CD4-positive, alpha-beta memory T cell (primary cell): ENCODE measurements at regions of chr7 and their contacts with region 1.

Region 1: DNA sequence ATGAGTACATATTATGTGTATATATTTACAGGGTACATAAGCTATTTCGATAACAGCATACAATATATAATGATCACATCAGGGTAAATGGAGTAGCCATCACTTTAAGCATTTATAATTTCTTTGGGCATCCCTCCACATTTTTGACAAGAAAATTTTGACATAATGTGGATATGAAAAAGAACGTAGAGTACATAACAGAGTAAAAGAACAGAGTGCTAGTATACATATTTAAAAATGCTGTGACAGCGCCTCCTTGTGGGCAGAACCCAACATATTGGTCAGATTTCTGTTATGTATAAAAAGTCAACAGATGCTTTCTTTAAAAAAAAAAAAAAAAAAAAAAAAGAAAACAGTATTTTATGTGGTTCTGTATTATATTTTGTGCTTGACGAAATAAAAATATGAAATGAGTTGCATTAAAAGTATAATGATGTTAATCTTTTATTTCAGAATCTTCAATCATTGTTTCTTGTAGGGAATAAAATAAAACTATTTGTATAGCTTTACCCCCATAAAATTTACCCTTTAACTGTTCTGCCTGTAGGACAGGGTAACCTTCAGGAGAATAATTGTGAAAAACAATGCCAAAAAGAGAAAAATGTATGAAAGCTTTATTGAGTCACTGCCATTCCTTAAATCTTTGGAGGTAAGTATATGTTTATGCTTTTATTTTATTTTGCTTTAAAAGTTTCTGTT is 18.3 kb upstream of the HBP1 start:
- DNase-seq: peak; percentile 68 to 81 (median 74)
- H3K4me3 ChIP-seq: no peak overlapping the region
- H3K4me3 Mint-ChIP-seq: no peak overlapping the region
- H3K27ac ChIP-seq: no peak overlapping the region
- H3K27ac Mint-ChIP-seq: no peak overlapping the region
- H3K4me1 ChIP-seq: no peaks in the 10 kb centered on the region
- H3K4me1 Mint-ChIP-seq: peaks cover 0 to 2% (median 1%) of the 10 kb centered on the region in 4 donors
- H3K27me3 ChIP-seq: no peaks in the 10 kb centered on the region
- H3K27me3 Mint-ChIP-seq: peaks cover 0 to 2% of the 10 kb centered on the region in 2 donors

Region 2: DNA sequence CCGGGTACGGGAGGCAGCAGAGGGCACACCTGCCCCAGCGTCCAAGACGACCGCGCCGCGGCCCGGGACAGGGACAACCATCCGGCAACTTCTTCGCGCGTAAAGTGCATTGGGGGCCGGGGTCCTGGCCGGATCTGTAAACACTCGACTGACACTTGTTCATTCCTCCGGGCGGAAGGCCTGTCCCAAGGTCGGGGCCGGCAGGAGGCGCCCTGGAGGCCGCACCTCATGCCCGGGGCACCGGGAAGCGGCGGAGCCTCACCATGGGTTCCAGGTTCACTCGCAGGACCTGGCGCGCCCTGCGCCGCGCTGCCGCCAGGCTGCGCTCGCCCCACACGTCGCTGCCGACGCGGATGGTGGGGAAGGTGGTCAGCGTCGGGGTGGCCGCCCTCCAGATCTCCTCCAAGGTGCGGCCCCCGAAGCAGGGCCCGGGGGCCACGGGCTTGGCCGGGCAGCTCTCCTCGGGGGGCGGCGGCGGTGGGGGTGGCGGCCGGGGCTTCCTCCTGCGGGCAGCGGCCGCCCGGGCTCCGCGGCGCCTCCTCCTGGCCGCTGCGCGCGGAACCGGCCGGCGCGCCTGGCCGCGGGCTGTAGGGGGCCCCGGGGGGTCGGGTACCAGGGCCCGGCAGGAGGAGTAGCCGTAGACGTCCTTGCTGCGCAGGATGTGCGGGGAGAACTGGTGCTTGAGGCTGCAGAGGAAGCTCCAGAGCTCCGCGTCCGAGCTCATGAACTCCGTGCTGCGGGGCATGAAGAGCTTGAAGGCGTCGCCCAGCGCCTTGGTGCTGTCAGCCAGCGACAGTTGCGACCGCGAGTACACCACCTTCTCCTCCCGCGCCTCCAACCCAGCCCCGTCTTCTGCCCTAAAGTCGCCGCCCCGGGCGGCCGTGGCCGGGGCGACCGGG is 490.3 kb before region 1 on chr7:
- CTCF ChIA-PET with region 1: interaction called, 6 read pairs
- POLR2A ChIA-PET with region 1: no interaction called
- intact Hi-C with region 1: loop called (anchors 5 kb)
- DNase-seq: peak; percentile 72 to 79 (median 76)
- H3K4me3 ChIP-seq: peak overlapping the region; percentile 14 to 58
- H3K4me3 Mint-ChIP-seq: peak overlapping the region; percentile 85 to 92 (median 88)
- H3K27ac ChIP-seq: peak overlapping the region; percentile 68
- H3K27ac Mint-ChIP-seq: peak overlapping the region; percentile 87 to 97 (median 93)
- H3K4me1 ChIP-seq: peaks cover 35% of the 10 kb centered on the region
- H3K4me1 Mint-ChIP-seq: peaks cover 17 to 40% (median 29%) of the 10 kb centered on the region in 4 donors
- H3K27me3 ChIP-seq: no peaks in the 10 kb centered on the region
- H3K27me3 Mint-ChIP-seq: no peaks in the 10 kb centered on the region

Region 3: DNA sequence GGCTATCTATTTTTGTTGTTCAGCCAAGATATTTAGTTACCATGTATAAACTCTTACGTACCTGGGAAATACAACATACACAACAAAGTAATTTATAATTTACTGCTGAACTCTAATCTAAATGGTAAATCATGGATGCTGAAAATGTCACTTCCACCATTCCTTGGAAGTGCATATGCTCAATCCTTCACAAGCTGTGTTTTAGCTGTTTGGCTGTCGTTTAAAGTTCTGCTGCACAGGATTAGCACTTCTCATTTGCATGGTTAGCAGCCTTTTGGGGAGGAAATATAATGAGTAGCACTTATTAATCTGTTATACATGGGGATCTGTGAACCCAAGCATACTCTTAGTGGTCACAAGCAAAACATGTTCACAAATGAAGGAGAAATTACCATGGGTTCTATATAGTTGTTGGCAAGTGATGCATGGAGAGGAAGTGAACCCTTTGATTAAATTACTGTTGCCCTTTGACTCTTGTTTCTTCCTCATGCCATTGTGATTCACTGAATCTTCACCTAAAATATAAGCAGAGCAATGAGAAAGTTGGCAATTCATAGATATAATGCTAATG is 267.0 kb before region 1 on chr7:
- CTCF ChIA-PET with region 1: no interaction called
- POLR2A ChIA-PET with region 1: no interaction called
- intact Hi-C with region 1: no loop called
- DNase-seq: no peak
- H3K4me3 ChIP-seq: no peak overlapping the region
- H3K4me3 Mint-ChIP-seq: no peak overlapping the region
- H3K27ac ChIP-seq: no peak overlapping the region
- H3K27ac Mint-ChIP-seq: peak overlapping the region in 3 of 7 donors; percentile 9 to 78 (median 23)
- H3K4me1 ChIP-seq: no peaks in the 10 kb centered on the region
- H3K4me1 Mint-ChIP-seq: peaks cover 4 to 28% (median 8%) of the 10 kb centered on the region in 4 donors
- H3K27me3 ChIP-seq: no peaks in the 10 kb centered on the region
- H3K27me3 Mint-ChIP-seq: no peaks in the 10 kb centered on the region

Region 4: GRCh38 chr7:106947244-106947728 is 203.2 kb before region 1 on chr7:
- CTCF ChIA-PET with region 1: interaction called, 40 read pairs
- POLR2A ChIA-PET with region 1: no interaction called
- intact Hi-C with region 1: loop called (anchors 1 kb)
- DNase-seq: peak in 4 of 5 donors; percentile 22 to 40 (median 30)
- H3K4me3 ChIP-seq: no peak overlapping the region
- H3K4me3 Mint-ChIP-seq: no peak overlapping the region
- H3K27ac ChIP-seq: no peak overlapping the region
- H3K27ac Mint-ChIP-seq: no peak overlapping the region
- H3K4me1 ChIP-seq: no peaks in the 10 kb centered on the region
- H3K4me1 Mint-ChIP-seq: no peaks in the 10 kb centered on the region
- H3K27me3 ChIP-seq: no peaks in the 10 kb centered on the region
- H3K27me3 Mint-ChIP-seq: peaks cover 0 to 8% of the 10 kb centered on the region in 2 donors

Region 5: DNA sequence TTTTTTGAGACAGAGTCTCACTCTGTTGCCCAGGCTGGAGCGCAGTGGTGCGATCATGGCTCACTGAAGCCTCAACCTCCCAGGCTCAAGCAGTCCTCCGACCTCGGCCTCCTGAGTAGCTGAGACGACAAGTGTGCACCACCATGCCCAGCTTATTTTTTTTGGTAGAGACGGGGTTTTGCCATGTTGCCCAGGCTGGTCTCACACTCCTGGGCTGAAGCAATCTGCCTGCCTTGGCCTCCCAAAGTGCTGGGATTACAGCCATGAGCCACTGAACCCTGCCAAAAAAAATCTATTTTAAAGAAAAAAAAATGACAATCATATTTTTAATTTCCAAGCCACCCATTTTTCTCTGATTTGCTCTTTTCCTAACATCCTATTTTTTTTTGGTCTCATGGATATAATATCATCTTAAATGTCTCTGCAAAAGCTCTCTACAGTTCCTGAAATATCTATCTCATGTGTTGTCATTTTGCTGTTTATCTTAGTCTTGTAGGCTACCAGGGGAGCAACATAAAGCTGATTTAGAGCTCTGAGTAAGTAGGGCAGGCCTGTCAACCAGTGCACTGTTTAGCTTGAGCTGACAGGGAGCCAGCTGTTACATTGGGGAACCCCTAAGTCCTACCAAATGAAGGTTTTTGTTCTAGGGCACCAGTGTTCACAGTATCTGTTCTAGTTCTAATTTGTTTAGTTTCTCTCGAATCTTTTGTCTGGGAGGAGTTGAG is 11.7 kb before region 1 on chr7:
- CTCF ChIA-PET with region 1: interaction called, 46 read pairs
- POLR2A ChIA-PET with region 1: no interaction called
- intact Hi-C with region 1: no loop called
- DNase-seq: no peak
- H3K4me3 ChIP-seq: no peak overlapping the region
- H3K4me3 Mint-ChIP-seq: no peak overlapping the region
- H3K27ac ChIP-seq: no peak overlapping the region
- H3K27ac Mint-ChIP-seq: no peak overlapping the region
- H3K4me1 ChIP-seq: no peaks in the 10 kb centered on the region
- H3K4me1 Mint-ChIP-seq: no peaks in the 10 kb centered on the region
- H3K27me3 ChIP-seq: no peaks in the 10 kb centered on the region
- H3K27me3 Mint-ChIP-seq: no peaks in the 10 kb centered on the region

Region 6: DNA sequence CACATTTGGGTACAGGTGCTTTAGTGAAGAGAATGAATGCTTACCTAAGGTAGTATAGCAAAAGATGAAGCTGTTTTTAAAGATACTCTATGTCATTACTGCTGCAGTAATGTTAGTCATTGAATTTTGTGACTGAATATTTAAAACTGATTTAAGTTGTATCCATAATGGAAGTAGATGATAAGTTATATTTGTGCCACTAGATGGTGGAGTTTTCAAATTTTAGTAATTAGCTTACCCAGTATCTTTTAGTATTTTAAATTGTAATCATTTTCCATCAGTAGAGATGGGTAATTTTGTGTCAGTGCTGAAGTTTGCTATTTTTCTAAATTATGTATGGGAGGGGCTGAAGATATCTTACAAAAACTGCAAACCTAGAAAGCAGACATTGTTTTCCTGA is 43.5 kb after region 1 on chr7:
- CTCF ChIA-PET with region 1: interaction called, 10 read pairs
- POLR2A ChIA-PET with region 1: no interaction called
- intact Hi-C with region 1: no loop called
- DNase-seq: no peak
- H3K4me3 ChIP-seq: no peak overlapping the region
- H3K4me3 Mint-ChIP-seq: no peak overlapping the region
- H3K27ac ChIP-seq: no peak overlapping the region
- H3K27ac Mint-ChIP-seq: peak overlapping the region in 3 of 7 donors; percentile 39 to 64 (median 54)
- H3K4me1 ChIP-seq: no peaks in the 10 kb centered on the region
- H3K4me1 Mint-ChIP-seq: peaks cover 0 to 9% (median 5%) of the 10 kb centered on the region in 4 donors
- H3K27me3 ChIP-seq: no peaks in the 10 kb centered on the region
- H3K27me3 Mint-ChIP-seq: no peaks in the 10 kb centered on the region

Region 7: GRCh38 chr7:107879400-107880035 is 729.0 kb after region 1 on chr7:
- CTCF ChIA-PET with region 1: interaction called, 18 read pairs
- POLR2A ChIA-PET with region 1: no interaction called
- intact Hi-C with region 1: loop called (anchors 1 kb)
- DNase-seq: peak; percentile 53 to 68 (median 57)
- H3K4me3 ChIP-seq: no peak overlapping the region
- H3K4me3 Mint-ChIP-seq: no peak overlapping the region
- H3K27ac ChIP-seq: no peak overlapping the region
- H3K27ac Mint-ChIP-seq: peak overlapping the region in 2 of 7 donors; percentile 4 to 52
- H3K4me1 ChIP-seq: peaks cover 18% of the 10 kb centered on the region
- H3K4me1 Mint-ChIP-seq: peaks cover 13 to 26% (median 21%) of the 10 kb centered on the region in 4 donors
- H3K27me3 ChIP-seq: no peaks in the 10 kb centered on the region
- H3K27me3 Mint-ChIP-seq: peaks cover 3 to 6% of the 10 kb centered on the region in 2 donors